ENCODE measurements at regions of chr2 and their contacts with region 1.

Region 1: GRCh38 chr2:98444436-98445176 is at the start of gene INPP4A:
- DNase-seq: peak; percentile 87
- ATAC-seq: peak; percentile 97
- total RNA-seq, gene INPP4A: 16.8 TPM

Region 2: DNA sequence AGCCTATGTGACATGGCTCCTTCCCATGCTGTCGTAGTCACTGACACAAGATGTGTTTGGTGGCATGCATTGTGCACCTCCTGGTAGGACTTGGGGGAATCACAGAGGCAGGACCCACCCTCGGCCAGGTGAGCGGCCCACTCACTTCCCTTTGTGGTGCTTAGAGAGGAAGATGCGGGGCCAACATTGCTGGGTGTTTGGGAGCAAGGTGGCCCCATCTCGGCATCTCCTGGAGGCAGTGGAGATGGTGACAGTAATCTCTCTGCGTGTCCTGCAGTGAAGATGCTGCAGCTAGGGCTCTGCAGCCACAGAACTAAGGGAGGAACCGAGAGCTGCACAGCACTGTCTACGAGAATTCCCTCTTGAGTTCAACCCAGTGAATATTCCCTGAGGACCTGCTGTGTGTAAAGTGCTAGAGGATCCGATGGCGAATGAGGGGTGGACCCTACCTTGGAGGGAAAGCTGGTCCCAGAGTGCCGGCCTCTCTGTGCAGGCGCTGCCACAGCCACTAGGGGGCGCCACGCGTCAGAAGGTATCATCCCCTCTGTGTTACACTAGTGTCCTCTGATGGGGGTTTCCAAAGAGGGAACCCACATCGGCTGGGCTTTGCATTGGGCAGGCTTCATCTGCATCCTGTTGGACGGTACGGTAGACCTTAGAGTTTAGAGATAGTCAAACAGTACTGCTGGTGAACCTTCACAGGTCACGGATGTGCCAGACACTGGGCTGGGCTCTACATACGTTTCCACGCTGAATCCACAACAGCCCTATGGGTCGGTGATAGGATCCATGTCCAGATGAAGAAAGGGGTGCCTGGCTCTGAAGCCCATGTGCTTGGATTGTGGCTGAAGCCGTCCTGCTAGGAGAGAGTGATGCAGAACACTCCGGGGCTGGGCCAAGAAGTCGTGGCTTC is 124.5 kb after region 1 on chr2:
- intact Hi-C with region 1: loop called (anchors 10 kb)
- DNase-seq: peak; percentile 72
- ATAC-seq: peak; percentile 34